ENCODE measurements at regions of chr4 and their contacts with region 1.

Region 1: GRCh38 chr4:142883040-142883832 is 37.1 kb upstream of the INPP4B start:
- DNase-seq: no peak
- ATAC-seq: peak in 1 of 8 donors; percentile 48
- H3K4me3 ChIP-seq: no peak overlapping the region
- H3K27ac ChIP-seq: no peak overlapping the region
- H3K4me1 ChIP-seq: no peaks in the 10 kb centered on the region
- H3K27me3 ChIP-seq: no peaks in the 10 kb centered on the region
- CTCF ChIP-seq: peak; percentile 14 to 56 (median 44)

Region 2: GRCh38 chr4:143025081-143025704 is 142.0 kb after region 1 on chr4:
- intact Hi-C with region 1: loop called in 4 of 10 experiments (anchors 10 kb)
- DNase-seq: no peak
- ATAC-seq: peak in 4 of 8 donors; percentile 44 to 65 (median 57)
- H3K4me3 ChIP-seq: no peak overlapping the region
- H3K27ac ChIP-seq: no peak overlapping the region
- H3K4me1 ChIP-seq: peaks cover 0 to 8% (median 0%) of the 10 kb centered on the region in 9 donors
- H3K27me3 ChIP-seq: no peaks in the 10 kb centered on the region
- CTCF ChIP-seq: peak in 7 of 9 donors; percentile 16 to 56 (median 52)

Measured in heart right ventricle (tissue), 16 donors.